OCI-LY7 (cell line): ENCODE measurements at regions of chr16 and their contacts with region 1.

Region 1: GRCh38 chr16:66588981-66589713 is 9.9 kb downstream of the CMTM2 start:
- DNase-seq: peak; percentile 75
- H3K4me3 ChIP-seq: no peak overlapping the region
- H3K27ac ChIP-seq: no peak overlapping the region
- H3K4me1 ChIP-seq: peaks cover 25% of the 10 kb centered on the region
- CTCF ChIP-seq: peak; percentile 87

Region 2: DNA sequence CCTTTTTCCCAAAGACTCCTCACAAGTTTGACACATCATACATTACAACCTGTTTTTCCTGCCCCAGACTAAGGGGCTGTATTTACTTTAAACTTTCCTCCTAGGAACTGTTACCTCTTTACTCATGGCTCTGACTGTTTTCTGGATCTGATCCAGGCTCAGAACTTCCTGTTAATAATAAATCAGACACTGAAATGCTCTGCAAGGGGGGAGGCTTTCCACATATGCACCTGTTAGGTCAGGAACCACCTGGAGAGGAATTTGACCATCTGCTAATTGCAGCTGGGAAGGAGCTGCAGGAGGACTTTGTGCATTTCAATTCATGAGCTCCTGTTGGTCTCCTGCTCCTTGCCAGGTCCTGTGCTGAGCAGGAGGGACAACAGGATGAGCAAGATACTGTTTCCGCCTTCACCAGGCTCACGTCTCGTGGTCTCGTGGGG is 699.6 kb before region 1 on chr16:
- CTCF ChIA-PET with region 1: no interaction called
- POLR2A ChIA-PET with region 1: no interaction called
- intact Hi-C with region 1: no loop called
- DNase-seq: no peak
- H3K4me3 ChIP-seq: no peak overlapping the region
- H3K27ac ChIP-seq: no peak overlapping the region
- H3K4me1 ChIP-seq: no peaks in the 10 kb centered on the region
- CTCF ChIP-seq: no peak

Region 3: DNA sequence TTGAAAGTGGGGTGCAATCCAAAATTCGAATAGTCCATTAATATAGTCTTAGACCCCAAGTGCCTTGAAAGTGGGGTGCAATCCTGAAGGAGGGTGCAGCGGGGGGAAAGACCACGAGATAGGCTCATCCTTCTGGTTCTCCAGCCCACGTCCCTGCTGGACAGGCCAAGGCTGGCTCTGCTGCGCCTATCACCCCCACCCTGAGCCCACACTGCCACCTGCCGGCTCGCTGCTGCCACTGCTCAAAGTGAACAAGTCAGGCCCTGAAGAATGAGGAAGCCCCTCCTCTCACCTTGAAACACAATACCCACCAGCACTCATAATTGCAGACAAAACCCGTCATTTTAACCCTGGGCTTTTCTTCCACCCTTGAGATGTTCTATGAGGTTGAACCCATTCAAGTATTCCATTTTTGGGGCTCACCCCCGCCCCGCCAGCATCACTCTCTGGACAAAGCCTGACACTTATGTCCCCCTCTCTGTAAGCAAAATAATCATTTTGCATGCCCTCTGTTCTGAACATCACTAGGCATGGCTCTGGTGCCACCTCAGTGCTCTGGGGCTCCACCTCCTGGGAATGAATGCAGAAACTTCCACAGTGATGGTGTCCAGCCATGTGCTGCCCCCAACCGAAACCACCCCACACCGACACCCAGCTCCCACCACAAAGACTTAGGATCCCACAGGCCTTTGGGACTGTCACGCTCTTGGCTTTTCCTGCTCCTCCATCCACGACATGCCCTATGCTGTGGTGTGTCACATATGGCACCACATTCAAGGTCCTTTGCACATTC is 105.3 kb before region 1 on chr16:
- CTCF ChIA-PET with region 1: no interaction called
- POLR2A ChIA-PET with region 1: no interaction called
- intact Hi-C with region 1: loop called (anchors 1 kb)
- DNase-seq: peak; percentile 77
- H3K4me3 ChIP-seq: no peak overlapping the region
- H3K27ac ChIP-seq: no peak overlapping the region
- H3K4me1 ChIP-seq: peaks cover 6% of the 10 kb centered on the region
- CTCF ChIP-seq: peak; percentile 99

Region 4: GRCh38 chr16:66516808-66517585 is 72.2 kb before region 1 on chr16:
- CTCF ChIA-PET with region 1: no interaction called
- POLR2A ChIA-PET with region 1: no interaction called
- intact Hi-C with region 1: loop called (anchors 2 kb)
- DNase-seq: peak; percentile 95
- H3K4me3 ChIP-seq: peak overlapping the region; percentile 58
- H3K27ac ChIP-seq: peak overlapping the region; percentile 68
- H3K4me1 ChIP-seq: peaks cover 39% of the 10 kb centered on the region
- CTCF ChIP-seq: no peak